ENCODE measurements at regions of chr6 and their contacts with region 1.

Region 1: GRCh38 chr6:129730477-129731165 is 20.6 kb upstream of the ARHGAP18 start:
- DNase-seq: peak; percentile 55
- ATAC-seq: peak; percentile 51
- H3K4me3 Mint-ChIP-seq: no peak overlapping the region
- H3K27ac Mint-ChIP-seq: no peak overlapping the region
- H3K4me1 Mint-ChIP-seq: peaks cover 12% of the 10 kb centered on the region
- H3K27me3 Mint-ChIP-seq: no peaks in the 10 kb centered on the region

Region 2: DNA sequence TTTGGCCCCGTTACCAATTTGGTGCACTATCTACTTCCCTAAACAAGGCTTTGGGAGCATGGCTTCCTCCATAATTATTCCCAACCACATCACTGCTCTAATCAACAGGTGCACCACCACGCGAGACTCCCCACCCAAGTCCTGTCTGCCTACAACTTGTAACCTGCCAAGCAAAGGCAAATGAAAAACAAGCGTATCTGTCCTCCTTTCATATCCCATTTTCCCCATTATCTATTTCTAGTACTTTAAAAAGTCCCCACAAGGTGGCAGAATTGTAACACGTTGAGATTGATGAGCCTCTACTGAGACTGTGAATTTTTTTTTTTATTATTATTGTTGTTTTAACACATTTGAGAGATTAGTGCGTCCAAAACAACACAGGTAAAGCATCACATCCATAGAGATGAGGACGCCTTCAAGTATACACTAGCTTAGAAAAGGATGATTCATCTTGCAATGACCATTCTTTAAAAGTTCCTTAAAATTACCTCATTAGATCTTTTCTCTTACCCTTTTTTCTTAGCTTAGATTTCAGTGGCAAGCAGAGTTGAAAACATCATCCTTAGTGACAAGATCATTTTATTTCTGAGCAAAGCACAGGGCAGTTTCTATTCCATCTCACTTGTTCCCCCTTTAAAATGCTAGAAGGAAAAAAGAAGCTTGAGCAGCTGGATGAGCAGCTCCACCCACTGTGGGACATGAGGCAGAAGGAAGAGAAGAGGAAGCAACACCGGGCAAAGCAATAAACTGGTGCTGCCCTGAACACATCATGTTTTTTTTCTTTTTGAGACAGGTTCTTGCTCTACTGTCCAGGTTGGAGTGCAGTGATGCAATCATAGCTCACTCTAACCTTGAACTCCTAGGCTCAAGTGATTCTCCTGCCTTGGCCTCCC is 231.4 kb before region 1 on chr6:
- CTCF ChIA-PET with region 1: interaction called, 45 read pairs
- POLR2A ChIA-PET with region 1: no interaction called
- DNase-seq: peak; percentile 39
- ATAC-seq: peak; percentile 60
- H3K4me3 Mint-ChIP-seq: peak overlapping the region; percentile 0
- H3K27ac Mint-ChIP-seq: peak overlapping the region; percentile 8
- H3K4me1 Mint-ChIP-seq: peaks cover 29% of the 10 kb centered on the region
- H3K27me3 Mint-ChIP-seq: no peaks in the 10 kb centered on the region

Region 3: DNA sequence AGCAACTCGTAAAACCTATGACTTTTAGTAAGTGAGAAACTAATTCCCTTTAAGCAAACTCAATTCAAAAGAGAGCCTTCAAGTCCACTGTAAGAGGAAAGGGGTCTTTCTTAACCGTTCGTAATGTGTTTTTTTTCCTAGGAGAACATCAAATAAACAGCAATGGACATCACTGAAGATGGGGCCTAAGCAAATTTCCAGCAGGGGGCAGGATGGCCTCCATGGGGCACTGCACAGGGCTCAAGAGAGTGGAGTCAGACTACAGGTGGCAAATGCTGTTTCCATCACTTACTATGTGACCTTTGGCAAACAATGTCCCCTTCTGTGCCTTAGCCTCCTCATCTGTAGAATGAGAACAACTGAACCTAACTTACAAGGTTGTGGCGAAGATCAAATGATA is 109.4 kb before region 1 on chr6:
- CTCF ChIA-PET with region 1: interaction called, 12 read pairs
- POLR2A ChIA-PET with region 1: no interaction called
- DNase-seq: peak; percentile 45
- ATAC-seq: no peak
- H3K4me3 Mint-ChIP-seq: no peak overlapping the region
- H3K27ac Mint-ChIP-seq: no peak overlapping the region
- H3K4me1 Mint-ChIP-seq: no peaks in the 10 kb centered on the region
- H3K27me3 Mint-ChIP-seq: no peaks in the 10 kb centered on the region

Region 4: GRCh38 chr6:129683601-129684322 is 46.9 kb before region 1 on chr6:
- CTCF ChIA-PET with region 1: interaction called, 11 read pairs
- POLR2A ChIA-PET with region 1: no interaction called
- DNase-seq: peak; percentile 76
- ATAC-seq: peak; percentile 91
- H3K4me3 Mint-ChIP-seq: peak overlapping the region; percentile 52
- H3K27ac Mint-ChIP-seq: peak overlapping the region; percentile 93
- H3K4me1 Mint-ChIP-seq: peaks cover 59% of the 10 kb centered on the region
- H3K27me3 Mint-ChIP-seq: no peaks in the 10 kb centered on the region

Region 5: DNA sequence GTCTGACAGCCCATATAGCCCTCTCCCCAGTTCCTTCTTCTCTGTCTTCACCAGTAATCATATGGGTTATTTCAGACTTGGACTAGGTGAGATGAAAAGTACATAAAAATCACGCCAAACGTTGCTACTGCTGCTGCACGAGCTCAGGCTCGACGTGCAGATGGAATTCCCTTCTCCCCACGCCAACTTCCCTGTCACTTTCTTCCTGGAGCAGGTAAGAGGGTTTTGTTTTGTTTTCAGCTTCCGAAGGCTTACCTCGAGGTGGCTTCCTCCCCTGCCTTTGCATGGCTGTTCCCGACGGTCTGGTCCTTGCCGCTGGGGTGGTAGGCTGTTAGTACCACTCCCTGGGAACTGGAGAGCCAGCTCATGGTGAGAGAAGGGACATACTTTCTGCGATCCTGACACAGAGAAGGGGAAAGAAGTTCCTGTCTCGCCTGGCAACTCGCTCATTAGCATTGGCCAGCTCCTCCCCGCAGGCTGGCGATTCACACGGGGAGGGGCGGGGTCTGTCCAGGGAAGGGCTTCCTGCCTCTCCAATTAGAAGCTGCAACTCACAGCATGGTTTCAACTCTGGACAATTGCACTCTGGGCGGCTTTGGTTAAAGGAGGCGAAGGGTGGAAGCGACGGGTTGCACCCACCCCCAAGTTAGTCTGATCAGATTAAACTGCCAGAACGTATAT is 20.7 kb before region 1 on chr6 and contains the start of gene ARHGAP18:
- CTCF ChIA-PET with region 1: interaction called, 12 read pairs
- POLR2A ChIA-PET with region 1: no interaction called
- DNase-seq: peak; percentile 83
- ATAC-seq: peak; percentile 98
- H3K4me3 Mint-ChIP-seq: peak within 1 kb of the TSS; percentile 96
- H3K27ac Mint-ChIP-seq: peak within 1 kb of the TSS; percentile 86
- H3K4me1 Mint-ChIP-seq: peaks cover 48% of the 10 kb centered on the region
- H3K27me3 Mint-ChIP-seq: no peaks in the 10 kb centered on the region
- total RNA-seq, gene ARHGAP18: 11.9 to 12.1 TPM